Calu3 (cell line): ENCODE measurements at regions of chr5 and their contacts with region 1.

Region 1: GRCh38 chr5:129904102-129904666 is at the start of gene CHSY3:
- DNase-seq: peak; percentile 88
- H3K4me3 Mint-ChIP-seq: peak within 1 kb of the TSS; percentile 80
- H3K27ac Mint-ChIP-seq: peak within 1 kb of the TSS; percentile 37
- H3K4me1 Mint-ChIP-seq: peaks cover 23% of the 10 kb centered on the region
- H3K27me3 Mint-ChIP-seq: peaks cover 30% of the 10 kb centered on the region
- CTCF ChIP-seq: no peak
- total RNA-seq, gene CHSY3: 1.1 and 1.5 TPM in 2 replicates

Region 2: GRCh38 chr5:130141659-130142320 is 237.6 kb after region 1 on chr5:
- CTCF ChIA-PET with region 1: no interaction called
- intact Hi-C with region 1: loop called (anchors 5 kb)
- DNase-seq: peak; percentile 75
- H3K4me3 Mint-ChIP-seq: no peak overlapping the region
- H3K27ac Mint-ChIP-seq: no peak overlapping the region
- H3K4me1 Mint-ChIP-seq: no peaks in the 10 kb centered on the region
- H3K27me3 Mint-ChIP-seq: no peaks in the 10 kb centered on the region
- CTCF ChIP-seq: peak; percentile 71

Region 3: DNA sequence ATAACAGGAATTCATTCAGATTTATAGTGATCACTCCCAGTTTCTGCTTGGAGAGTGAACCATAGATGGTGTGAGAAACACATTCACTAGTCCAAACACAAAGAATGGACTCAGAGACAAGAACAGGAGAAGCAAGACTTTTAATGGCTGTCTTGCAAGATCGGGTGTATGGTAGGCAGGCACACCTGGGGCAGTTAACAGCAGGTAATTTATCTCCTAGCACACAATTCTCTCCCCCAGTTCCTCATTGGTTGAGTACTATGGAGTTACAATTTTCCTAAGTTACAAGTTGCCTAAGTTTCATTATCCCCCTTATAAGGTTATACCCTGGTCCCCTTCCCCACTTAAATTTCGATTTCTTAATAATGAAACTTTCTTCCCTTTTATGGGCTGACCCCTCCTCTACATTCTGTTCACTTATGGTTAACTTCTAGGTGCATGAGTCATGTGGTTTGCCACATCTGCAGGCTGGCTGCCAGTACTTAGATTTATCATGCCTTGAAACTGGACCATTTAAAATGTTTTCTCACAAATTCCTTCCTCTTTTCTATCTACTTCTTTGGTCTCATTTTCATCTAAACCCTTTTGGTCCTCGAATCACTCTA is 637.5 kb after region 1 on chr5:
- CTCF ChIA-PET with region 1: interaction called, 3 read pairs
- intact Hi-C with region 1: loop called (anchors 10 kb)
- DNase-seq: peak; percentile 45
- H3K4me3 Mint-ChIP-seq: no peak overlapping the region
- H3K27ac Mint-ChIP-seq: peak overlapping the region; percentile 41
- H3K4me1 Mint-ChIP-seq: peaks cover 34% of the 10 kb centered on the region
- H3K27me3 Mint-ChIP-seq: no peaks in the 10 kb centered on the region
- CTCF ChIP-seq: no peak

Region 4: DNA sequence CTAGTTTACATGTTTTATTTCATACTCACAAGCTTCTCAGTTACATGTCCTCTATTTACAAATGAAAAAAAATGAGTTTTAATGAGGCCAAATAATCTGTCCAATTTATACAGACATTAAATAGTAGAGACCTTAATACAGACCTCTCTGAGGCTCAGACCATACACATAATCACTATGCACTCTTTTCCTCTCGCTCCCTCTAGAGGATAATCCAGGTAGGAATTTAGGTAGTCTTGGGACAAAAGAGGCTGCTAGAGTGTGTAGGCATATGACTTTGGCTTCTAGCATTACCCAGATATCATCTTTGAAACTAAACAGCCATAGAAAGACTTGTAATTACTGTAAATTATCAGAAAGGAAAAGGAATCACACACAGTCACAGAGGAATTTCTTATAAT is 816.2 kb after region 1 on chr5:
- CTCF ChIA-PET with region 1: no interaction called
- intact Hi-C with region 1: loop called (anchors 10 kb)
- DNase-seq: peak; percentile 24
- H3K4me3 Mint-ChIP-seq: no peak overlapping the region
- H3K27ac Mint-ChIP-seq: no peak overlapping the region
- H3K4me1 Mint-ChIP-seq: peaks cover 10% of the 10 kb centered on the region
- H3K27me3 Mint-ChIP-seq: no peaks in the 10 kb centered on the region
- CTCF ChIP-seq: peak; percentile 70

Region 5: DNA sequence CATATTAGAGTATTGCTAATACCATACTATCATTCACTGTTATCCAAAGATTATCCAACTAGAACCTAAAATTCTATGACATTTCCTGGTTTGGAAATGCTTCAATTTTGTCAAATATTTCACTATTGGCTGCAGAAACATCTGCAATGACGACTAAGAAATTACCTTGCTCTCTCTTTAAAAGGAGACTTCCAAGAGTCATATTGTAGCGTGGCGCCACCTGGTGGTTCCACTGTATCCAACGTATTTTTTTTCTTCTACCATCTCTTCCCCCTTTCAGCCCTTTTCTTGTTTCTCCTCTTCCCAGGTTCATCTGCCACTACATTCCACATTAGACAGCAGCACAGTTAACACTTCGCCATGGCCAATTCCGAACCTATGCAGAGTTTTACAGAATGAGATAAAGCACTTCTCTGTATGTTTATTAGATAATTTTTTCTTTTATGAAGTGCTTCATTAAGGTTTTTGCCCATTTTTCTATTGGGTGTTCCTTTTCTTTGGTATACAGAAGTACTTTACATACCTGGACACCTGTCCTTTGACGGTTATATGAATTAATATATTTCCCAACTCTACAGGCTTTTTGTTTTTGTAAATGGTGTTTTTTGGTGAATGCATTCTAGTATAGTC is 1513.2 kb after region 1 on chr5:
- CTCF ChIA-PET with region 1: no interaction called
- intact Hi-C with region 1: loop called (anchors 2 kb)
- DNase-seq: peak; percentile 86
- H3K4me3 Mint-ChIP-seq: no peak overlapping the region
- H3K27ac Mint-ChIP-seq: peak overlapping the region; percentile 42
- H3K4me1 Mint-ChIP-seq: no peaks in the 10 kb centered on the region
- H3K27me3 Mint-ChIP-seq: no peaks in the 10 kb centered on the region
- CTCF ChIP-seq: peak; percentile 80